ENCODE measurements at regions of chr13 and their contacts with region 1.

Region 1: GRCh38 chr13:25901460-25902376 is 150.1 kb downstream of the SHISA2 start:
- DNase-seq: peak; percentile 44
- H3K4me3 Mint-ChIP-seq: peak overlapping the region; percentile 6
- H3K27ac Mint-ChIP-seq: no peak overlapping the region
- H3K4me1 Mint-ChIP-seq: peaks cover 26% of the 10 kb centered on the region
- H3K27me3 Mint-ChIP-seq: peaks cover 9% of the 10 kb centered on the region

Region 2: GRCh38 chr13:25762795-25763377 is 138.8 kb before region 1 on chr13:
- CTCF ChIA-PET with region 1: no interaction called
- POLR2A ChIA-PET with region 1: no interaction called
- intact Hi-C with region 1: loop called (anchors 1 kb)
- DNase-seq: peak; percentile 11
- H3K4me3 Mint-ChIP-seq: no peak overlapping the region
- H3K27ac Mint-ChIP-seq: no peak overlapping the region
- H3K4me1 Mint-ChIP-seq: peaks cover 17% of the 10 kb centered on the region
- H3K27me3 Mint-ChIP-seq: no peaks in the 10 kb centered on the region

Region 3: GRCh38 chr13:25874907-25875306 is 26.8 kb before region 1 on chr13:
- CTCF ChIA-PET with region 1: no interaction called
- POLR2A ChIA-PET with region 1: interaction called, 3 read pairs
- intact Hi-C with region 1: loop called (anchors 1 kb)
- DNase-seq: peak; percentile 74
- H3K4me3 Mint-ChIP-seq: no peak overlapping the region
- H3K27ac Mint-ChIP-seq: peak overlapping the region; percentile 4
- H3K4me1 Mint-ChIP-seq: peaks cover 63% of the 10 kb centered on the region
- H3K27me3 Mint-ChIP-seq: no peaks in the 10 kb centered on the region

Region 4: GRCh38 chr13:25971459-25972145 is 69.9 kb after region 1 on chr13:
- CTCF ChIA-PET with region 1: interaction called, 3 read pairs
- POLR2A ChIA-PET with region 1: no interaction called
- intact Hi-C with region 1: loop called (anchors 1 kb)
- DNase-seq: peak; percentile 72
- H3K4me3 Mint-ChIP-seq: no peak overlapping the region
- H3K27ac Mint-ChIP-seq: peak overlapping the region; percentile 30
- H3K4me1 Mint-ChIP-seq: peaks cover 47% of the 10 kb centered on the region
- H3K27me3 Mint-ChIP-seq: no peaks in the 10 kb centered on the region

Measured in activated CD4-positive, alpha-beta memory T cell treated with anti-CD3 and anti-CD28 coated beads for 36 hours (primary cell).